Pancreas (tissue), 10 donors: ENCODE measurements at regions of chr7 and their contacts with region 1.

Region 1: DNA sequence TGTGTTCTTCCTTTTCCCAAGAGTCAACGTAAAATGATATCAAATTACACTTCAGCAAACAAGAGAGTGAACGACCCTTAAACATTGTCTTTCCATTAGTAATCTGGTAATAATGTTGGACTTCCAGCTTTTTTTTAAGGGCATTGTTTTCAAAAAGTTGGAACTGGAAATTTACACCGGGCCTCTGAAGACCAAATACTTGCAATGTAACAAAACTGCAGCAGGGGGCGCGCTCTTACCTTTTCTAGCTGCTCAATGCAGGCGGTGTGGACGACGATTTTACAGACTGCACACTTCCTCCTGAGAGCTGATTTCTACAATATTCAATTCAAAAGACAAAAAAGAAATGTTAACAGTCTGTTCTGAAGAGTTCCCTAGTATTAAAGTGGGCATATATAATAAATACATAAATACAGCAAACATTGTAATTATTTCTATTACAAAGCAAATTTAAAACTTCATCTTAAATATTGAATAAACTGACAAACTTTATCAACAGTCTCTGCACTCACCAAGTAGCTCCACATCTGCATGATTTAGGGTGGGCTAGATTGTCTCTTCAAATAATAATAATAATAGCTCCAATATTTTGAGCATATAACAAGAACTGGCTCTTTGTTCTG is 190.4 kb downstream of the DGKI start:
- DNase-seq: peak; percentile 55 to 88 (median 74)
- ATAC-seq: peak; percentile 76 to 99 (median 94)
- H3K4me3 ChIP-seq: no peak overlapping the region
- H3K27ac ChIP-seq: no peak overlapping the region
- H3K4me1 ChIP-seq: no peaks in the 10 kb centered on the region
- H3K27me3 ChIP-seq: no peaks in the 10 kb centered on the region
- CTCF ChIP-seq: peak; percentile 44 to 73 (median 66)

Region 2: GRCh38 chr7:137563981-137564380 is 92.4 kb before region 1 on chr7:
- intact Hi-C with region 1: no loop called
- DNase-seq: no peak
- ATAC-seq: no peak
- H3K4me3 ChIP-seq: no peak overlapping the region
- H3K27ac ChIP-seq: no peak overlapping the region
- H3K4me1 ChIP-seq: no peaks in the 10 kb centered on the region
- H3K27me3 ChIP-seq: peaks cover 0 to 6% (median 0%) of the 10 kb centered on the region in 4 donors
- CTCF ChIP-seq: no peak

Region 3: DNA sequence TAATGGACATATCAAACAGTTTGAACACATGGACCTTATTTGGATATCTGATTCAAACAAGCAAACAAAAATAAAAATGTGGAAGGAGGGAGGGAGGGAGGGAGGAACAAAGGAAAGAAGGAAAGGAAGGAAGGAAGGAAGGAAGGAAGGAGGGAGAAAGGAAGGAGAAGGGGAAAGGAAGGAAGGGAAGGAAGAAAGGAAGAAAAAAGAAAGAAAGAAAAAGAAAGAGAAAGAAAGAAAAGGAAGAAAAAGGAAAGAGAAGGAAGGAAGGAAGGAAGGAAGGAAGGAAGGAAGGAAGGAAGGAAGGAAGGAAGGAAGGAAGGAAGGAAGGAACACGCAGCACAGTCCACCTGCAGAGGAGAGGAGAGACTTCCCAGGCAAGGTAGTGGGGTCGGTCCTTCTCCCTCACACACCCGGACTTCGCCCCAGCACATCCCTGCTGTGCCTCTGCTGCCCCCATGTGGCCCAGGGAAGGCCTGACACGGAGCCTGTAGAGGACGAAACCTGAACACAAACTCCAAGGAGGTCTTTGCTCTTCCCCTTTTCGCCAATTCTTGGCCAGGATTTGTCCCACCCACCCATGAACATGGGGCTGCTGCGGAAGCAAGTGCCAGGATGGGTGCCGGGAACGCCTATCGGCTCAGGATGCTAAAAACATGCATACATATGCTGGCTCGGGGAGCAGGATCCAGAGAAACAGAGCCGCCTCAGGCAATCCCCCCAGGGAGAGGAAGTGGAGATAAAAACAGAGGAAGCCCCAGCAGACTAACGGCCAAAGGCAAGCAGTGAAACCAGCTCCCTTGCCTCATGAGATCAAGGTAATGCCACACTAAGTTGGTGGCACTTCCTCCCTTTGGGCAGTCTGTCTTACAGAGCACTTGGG is 242.7 kb after region 1 on chr7:
- intact Hi-C with region 1: loop called in 2 of 3 experiments (anchors 5 kb)
- DNase-seq: peak; percentile 58 to 90 (median 76)
- ATAC-seq: peak; percentile 75 to 94 (median 94)
- H3K4me3 ChIP-seq: no peak overlapping the region
- H3K27ac ChIP-seq: no peak overlapping the region
- H3K4me1 ChIP-seq: no peaks in the 10 kb centered on the region
- H3K27me3 ChIP-seq: no peaks in the 10 kb centered on the region
- CTCF ChIP-seq: peak; percentile 70 to 89 (median 82)